ENCODE measurements at regions of chr3 and their contacts with region 1.

Region 1: DNA sequence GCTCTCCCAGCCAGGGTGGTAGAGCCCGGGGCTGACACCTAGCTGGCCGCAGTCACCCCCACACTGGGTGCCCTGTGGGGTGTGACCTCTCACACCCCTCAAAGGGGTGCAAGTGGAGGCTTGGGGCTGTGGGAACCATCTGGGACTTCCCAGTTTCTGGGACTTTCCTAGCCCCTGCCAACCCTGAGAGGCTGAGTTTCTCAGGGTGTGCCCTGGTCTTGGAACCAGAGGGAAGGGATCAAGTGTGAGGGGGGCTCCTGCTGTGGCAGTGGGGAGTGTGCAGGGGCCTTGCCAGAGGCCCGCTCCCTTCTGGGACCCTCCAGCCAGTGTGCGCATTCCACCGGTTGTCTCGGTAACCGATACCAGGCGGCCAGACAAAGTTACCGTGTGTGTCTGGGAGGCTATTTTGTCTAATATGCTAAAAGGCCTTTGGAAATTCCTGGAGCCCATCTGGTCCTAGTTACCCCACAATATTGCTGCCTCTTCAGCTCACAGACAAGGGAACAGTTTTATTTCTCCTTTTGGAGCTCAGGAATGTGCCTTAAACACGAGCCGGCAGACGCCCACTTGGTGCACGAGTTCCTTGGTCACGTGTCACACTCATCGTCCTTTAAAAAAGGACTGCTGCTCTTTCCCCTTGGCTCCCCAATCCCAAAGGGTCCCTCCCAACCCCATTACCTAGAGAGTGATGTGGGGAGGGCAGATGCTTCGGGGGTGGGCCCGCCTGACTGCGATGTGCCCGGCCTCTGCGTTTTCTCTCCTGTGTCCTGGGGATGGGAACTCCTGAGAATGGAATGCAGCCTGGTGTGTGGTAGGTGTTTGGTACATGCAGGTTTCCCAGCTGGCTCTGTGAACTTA is 33.2 kb downstream of the HDAC11 start:
- DNase-seq: no peak
- H3K4me3 Mint-ChIP-seq: no peak overlapping the region
- H3K27ac Mint-ChIP-seq: no peak overlapping the region
- H3K4me1 Mint-ChIP-seq: peaks cover 29% of the 10 kb centered on the region
- H3K27me3 Mint-ChIP-seq: no peaks in the 10 kb centered on the region
- CTCF ChIP-seq: no peak

Region 2: DNA sequence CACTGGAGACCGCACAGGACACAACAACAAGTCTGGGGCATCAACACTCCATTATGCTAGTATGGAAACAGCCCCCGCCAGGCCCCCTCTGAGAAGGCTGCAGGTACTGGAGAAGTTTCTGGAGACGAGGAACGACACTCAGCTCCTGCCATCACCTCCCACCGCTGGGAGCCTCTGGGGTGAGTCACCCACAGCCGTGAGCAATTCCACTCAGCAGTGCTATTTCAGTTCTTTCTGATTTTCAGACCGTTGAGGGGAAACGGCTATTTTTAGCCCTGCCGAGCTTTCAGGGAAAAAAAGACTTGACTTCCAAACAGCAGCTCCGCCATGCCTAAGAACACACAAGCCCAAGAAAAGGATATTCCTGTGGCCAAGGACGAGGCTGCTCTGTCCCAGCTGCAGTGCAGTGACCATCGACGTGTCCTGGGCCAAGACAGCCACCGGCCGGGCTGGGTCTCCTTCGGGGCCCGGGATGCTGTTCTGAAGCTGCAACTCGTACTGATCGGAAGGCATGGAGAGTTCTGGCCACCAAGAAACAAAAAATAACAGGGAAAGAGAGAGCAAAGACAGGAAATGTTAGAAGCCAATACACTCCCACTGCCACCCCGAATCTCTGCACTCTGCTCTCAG is 134.0 kb before region 1 on chr3:
- CTCF ChIA-PET with region 1: no interaction called
- POLR2A ChIA-PET with region 1: no interaction called
- intact Hi-C with region 1: no loop called
- DNase-seq: peak; percentile 43
- H3K4me3 Mint-ChIP-seq: no peak overlapping the region
- H3K27ac Mint-ChIP-seq: peak overlapping the region; percentile 25
- H3K4me1 Mint-ChIP-seq: no peaks in the 10 kb centered on the region
- H3K27me3 Mint-ChIP-seq: no peaks in the 10 kb centered on the region
- CTCF ChIP-seq: no peak

Region 3: DNA sequence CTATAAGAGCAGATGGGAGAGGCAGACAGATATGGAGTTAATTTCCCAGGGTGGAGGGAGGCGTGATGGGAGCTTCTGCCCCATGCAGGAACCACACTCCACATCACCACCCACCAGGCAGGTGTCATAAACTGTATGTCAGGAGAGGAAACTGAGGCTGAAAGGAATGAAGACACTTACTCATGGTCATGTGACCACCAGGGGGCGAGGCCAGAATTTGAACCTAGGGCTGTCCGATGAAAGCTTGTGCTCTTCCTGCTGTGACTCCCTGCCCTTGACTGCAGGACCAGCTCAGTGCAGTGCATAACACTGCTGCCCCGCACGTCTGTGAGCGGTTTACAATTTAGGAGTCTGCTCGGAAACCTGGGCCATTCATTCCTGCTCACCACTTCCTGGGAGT is 122.0 kb before region 1 on chr3:
- CTCF ChIA-PET with region 1: no interaction called
- POLR2A ChIA-PET with region 1: no interaction called
- intact Hi-C with region 1: no loop called
- DNase-seq: no peak
- H3K4me3 Mint-ChIP-seq: no peak overlapping the region
- H3K27ac Mint-ChIP-seq: no peak overlapping the region
- H3K4me1 Mint-ChIP-seq: no peaks in the 10 kb centered on the region
- H3K27me3 Mint-ChIP-seq: no peaks in the 10 kb centered on the region
- CTCF ChIP-seq: no peak

Region 4: GRCh38 chr3:13525827-13526816 is 12.8 kb after region 1 on chr3:
- CTCF ChIA-PET with region 1: no interaction called
- POLR2A ChIA-PET with region 1: interaction called, 12 read pairs
- intact Hi-C with region 1: no loop called
- DNase-seq: peak; percentile 58
- H3K4me3 Mint-ChIP-seq: no peak overlapping the region
- H3K27ac Mint-ChIP-seq: peak overlapping the region; percentile 97
- H3K4me1 Mint-ChIP-seq: peaks cover 30% of the 10 kb centered on the region
- H3K27me3 Mint-ChIP-seq: no peaks in the 10 kb centered on the region
- CTCF ChIP-seq: no peak

Region 5: DNA sequence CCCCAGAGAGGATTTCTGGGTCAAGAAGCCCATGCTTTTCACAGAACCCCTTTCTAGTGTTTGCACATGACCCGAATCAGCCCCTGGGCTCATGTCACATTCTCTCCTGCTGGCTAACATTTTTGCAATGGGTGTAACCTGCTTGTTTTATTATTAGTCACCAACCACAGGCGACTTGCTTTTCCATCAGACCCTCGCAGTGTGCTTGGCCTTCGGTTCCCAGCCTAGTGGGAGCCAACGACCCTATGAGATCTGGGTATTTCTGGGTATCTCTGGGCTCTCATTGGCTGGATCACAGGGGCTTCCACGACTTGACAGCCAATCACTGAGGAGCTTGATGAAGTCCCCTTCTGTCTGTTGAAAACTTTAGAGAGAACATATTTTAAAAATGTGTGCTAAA is 24.6 kb after region 1 on chr3:
- CTCF ChIA-PET with region 1: interaction called, 3 read pairs
- POLR2A ChIA-PET with region 1: interaction called, 11 read pairs
- intact Hi-C with region 1: no loop called
- DNase-seq: peak; percentile 80
- H3K4me3 Mint-ChIP-seq: no peak overlapping the region
- H3K27ac Mint-ChIP-seq: peak overlapping the region; percentile 96
- H3K4me1 Mint-ChIP-seq: peaks cover 43% of the 10 kb centered on the region
- H3K27me3 Mint-ChIP-seq: no peaks in the 10 kb centered on the region
- CTCF ChIP-seq: no peak

Measured in MCF 10A (cell line).